ENCODE measurements at regions of chr15 and their contacts with region 1.

Region 1: DNA sequence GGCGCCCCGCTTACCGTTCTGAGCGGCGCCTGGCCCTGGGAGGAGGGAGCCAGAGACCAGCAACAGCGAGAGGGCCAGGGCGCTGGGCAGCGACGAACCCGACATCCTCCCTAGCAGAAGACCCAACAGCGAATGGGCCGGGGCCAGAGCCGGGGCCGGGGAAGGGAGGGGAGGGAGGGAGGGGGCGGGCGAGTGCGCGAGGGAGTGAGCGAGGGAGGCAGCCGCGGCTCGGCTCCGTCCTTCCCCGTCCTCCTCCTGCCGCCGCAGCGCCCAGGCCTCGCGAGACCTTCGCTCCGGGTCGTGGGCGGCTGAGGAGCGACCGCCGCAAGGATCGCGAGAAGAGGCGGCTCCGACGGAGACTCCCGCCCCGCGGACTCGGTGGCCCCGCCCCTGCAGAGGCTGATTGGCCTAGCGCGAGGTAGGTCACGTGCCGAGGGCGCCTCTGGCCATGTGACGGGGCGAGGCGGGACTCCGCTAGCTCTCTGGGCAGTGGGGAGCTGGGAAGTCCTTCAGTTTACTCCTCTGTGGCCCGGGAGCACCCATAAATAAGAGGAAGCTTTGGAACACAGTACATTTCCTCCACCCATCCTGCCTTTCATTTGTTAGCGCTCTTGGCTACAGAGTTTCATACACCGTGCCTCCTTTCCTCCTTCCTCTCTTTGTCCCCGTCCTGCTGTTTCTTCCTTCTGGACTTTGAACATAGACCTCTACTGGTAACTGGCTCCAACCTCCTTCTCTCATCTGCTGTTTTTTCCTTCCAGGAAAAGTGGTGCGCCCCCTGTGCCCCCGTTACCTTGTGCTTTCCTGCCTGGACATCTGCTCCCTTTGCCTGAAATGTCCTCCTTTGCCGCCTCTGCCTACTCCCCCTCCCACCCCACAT is at the start of gene NPTN:
- DNase-seq: peak; percentile 97
- H3K4me3 ChIP-seq: peak within 1 kb of the TSS; percentile 78 to 85
- H3K27ac ChIP-seq: peak within 1 kb of the TSS; percentile 82 to 98
- H3K4me1 ChIP-seq: peaks cover 28 to 29% of the 10 kb centered on the region in 2 experiments
- H3K27me3 ChIP-seq: no peaks in the 10 kb centered on the region
- CTCF ChIP-seq: 0 out of 2 replicates have a peak, but pooled peaks have one; percentile 14
- EP300 ChIP-seq: no peak
- RAD21 ChIP-seq: no peak
- polyA plus RNA-seq, gene NPTN: 177 and 183 TPM in 2 replicates

Region 2: GRCh38 chr15:73550190-73550589 is 83.2 kb before region 1 on chr15:
- CTCF ChIA-PET with region 1: interaction called, 16 read pairs
- POLR2A ChIA-PET with region 1: no interaction called
- DNase-seq: no peak
- H3K4me3 ChIP-seq: no peak overlapping the region
- H3K27ac ChIP-seq: no peak overlapping the region
- H3K4me1 ChIP-seq: no peaks in the 10 kb centered on the region
- H3K27me3 ChIP-seq: no peaks in the 10 kb centered on the region
- CTCF ChIP-seq: no peak
- EP300 ChIP-seq: no peak
- RAD21 ChIP-seq: no peak

Region 3: DNA sequence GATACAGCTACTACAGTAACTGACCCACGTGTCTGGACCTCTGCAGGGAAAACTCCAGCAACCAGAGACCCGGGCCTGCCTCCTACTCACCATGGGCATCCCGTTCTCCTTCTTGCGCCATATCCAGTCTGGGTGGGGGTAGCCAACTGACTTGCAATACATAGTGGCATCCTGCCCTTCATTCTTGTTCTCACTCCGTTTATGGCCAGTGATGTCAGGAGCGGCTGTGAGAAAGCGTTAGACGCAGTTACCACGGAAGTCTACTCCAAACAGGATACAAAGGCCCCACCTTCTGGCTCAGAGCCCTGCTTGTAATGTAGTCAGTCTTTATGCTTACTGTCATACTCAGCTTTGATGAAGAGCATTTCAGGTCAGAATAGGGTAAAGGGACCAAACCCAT is 59.8 kb before region 1 on chr15:
- CTCF ChIA-PET with region 1: interaction called, 19 read pairs
- POLR2A ChIA-PET with region 1: no interaction called
- DNase-seq: no peak
- H3K4me3 ChIP-seq: no peak overlapping the region
- H3K27ac ChIP-seq: no peak overlapping the region
- H3K4me1 ChIP-seq: peaks cover 0 to 2% of the 10 kb centered on the region in 2 experiments; a peak in 1 of 4 replicates
- H3K27me3 ChIP-seq: no peaks in the 10 kb centered on the region
- CTCF ChIP-seq: no peak
- EP300 ChIP-seq: no peak
- RAD21 ChIP-seq: no peak

Region 4: DNA sequence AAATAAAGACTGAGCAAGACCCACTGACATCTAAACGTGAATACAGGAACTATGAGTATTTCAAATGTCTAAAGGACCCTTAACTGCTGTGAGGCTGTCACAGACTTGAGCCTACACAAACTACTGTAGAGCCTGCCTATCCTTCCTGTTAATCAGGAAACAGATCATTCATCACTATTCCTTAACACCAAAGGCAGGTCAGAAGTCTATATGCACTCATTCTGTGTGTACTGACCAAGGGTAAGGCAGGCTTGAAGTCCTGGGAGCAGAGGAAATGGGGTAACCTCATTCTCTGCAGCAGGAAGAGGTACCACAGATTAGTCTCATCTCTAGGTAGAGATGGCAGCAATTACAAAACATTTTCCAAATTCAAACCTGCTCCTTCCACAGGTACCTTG is 30.9 kb before region 1 on chr15:
- CTCF ChIA-PET with region 1: interaction called, 16 read pairs
- POLR2A ChIA-PET with region 1: interaction called, 4 read pairs
- DNase-seq: no peak
- H3K4me3 ChIP-seq: no peak overlapping the region
- H3K27ac ChIP-seq: peak overlapping the region in 1 of 2 experiments; percentile 45; a peak in 1 of 4 replicates
- H3K4me1 ChIP-seq: peaks cover 22 to 41% of the 10 kb centered on the region in 2 experiments
- H3K27me3 ChIP-seq: no peaks in the 10 kb centered on the region
- CTCF ChIP-seq: no peak
- EP300 ChIP-seq: no peak
- RAD21 ChIP-seq: no peak

Region 5: DNA sequence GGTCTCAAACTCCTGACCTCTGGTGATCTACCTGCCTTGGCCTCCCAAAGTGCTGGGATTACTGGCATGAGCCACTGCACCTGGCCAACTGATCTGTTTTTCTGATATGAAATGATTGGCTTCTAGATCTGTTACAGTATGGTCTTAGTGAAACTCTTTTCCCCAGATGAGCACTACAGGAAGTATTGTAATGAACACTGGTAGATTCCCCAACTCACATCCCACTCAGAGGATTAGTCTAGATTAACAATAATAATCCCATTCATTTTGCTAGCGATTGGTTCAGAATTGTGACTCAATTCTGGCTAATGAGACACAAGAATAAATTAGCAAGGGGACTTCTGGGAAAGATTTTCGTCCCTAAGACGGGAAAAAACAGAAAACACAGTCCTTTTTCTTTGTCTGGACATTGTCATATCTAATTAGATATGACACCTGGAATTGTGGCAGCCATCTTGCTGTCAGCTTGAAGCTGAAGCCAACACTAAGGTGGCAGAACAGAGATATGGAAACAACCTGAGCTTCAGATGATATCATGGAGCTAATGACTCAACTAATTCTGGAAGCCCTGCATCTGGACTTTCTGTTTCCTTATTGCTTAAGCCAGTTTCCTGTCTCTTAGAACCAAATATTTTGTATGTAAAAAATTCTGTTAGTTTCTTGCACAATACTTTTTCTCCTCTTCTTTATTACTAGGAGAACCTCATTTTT is 17.2 kb after region 1 on chr15:
- CTCF ChIA-PET with region 1: interaction called, 37 read pairs
- POLR2A ChIA-PET with region 1: no interaction called
- DNase-seq: peak; percentile 49
- H3K4me3 ChIP-seq: peak overlapping the region in 1 of 2 experiments; percentile 26; a peak in 1 of 4 replicates
- H3K27ac ChIP-seq: peak overlapping the region; percentile 39 to 77; a peak in 3 of 4 replicates
- H3K4me1 ChIP-seq: no peaks in the 10 kb centered on the region; a peak in 2 of 4 replicates
- H3K27me3 ChIP-seq: no peaks in the 10 kb centered on the region
- CTCF ChIP-seq: no peak
- EP300 ChIP-seq: peak in 1 of 2 experiments; percentile 29; a peak in 1 of 4 replicates
- RAD21 ChIP-seq: no peak

Region 6: DNA sequence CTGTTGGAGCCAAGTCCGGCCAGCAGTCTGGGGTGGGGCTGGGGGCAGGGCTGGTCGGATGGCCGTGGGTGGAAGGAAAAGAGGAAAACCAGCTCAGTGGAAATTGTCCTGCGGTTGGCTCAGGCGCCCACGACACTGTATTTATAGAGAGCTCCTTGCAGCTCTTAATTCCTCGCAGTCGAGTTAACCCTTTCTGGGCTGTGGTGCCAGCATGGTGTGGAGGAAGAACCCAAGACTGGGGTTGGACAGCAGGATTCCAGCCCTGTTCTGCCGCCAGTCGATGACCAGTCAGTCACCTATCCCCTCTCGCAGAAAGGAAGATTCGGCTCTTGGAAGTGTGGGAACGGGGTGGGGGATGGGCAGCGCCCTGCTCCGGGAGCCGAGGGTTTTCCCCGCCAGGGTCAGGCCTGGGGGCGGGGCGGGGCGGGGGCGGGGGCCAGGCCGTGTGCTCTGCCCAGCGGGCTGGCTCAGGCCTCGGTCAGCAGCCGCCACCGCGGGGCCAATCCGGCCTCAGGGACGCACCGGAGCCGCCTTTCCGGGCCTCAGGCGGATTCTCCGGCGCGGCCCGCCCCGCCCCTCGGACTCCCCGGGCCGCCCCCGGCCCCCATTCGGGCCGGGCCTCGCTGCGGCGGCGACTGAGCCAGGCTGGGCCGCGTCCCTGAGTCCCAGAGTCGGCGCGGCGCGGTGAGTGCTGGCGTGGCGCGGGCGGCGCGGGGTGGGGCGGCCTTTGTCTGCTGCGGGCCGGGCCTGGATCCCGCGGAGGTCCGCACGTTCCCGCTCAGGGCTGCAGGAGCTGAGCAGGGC is 50.6 kb after region 1 on chr15 and contains the start of gene CD276:
- CTCF ChIA-PET with region 1: interaction called, 59 read pairs
- POLR2A ChIA-PET with region 1: interaction called, 3 read pairs
- DNase-seq: peak; percentile 91
- H3K4me3 ChIP-seq: peak within 1 kb of the TSS; percentile 82 to 89
- H3K27ac ChIP-seq: peak within 1 kb of the TSS; percentile 77 to 84
- H3K4me1 ChIP-seq: peaks cover 35 to 37% of the 10 kb centered on the region in 2 experiments; a peak in 3 of 4 replicates
- H3K27me3 ChIP-seq: no peaks in the 10 kb centered on the region
- CTCF ChIP-seq: no peak
- EP300 ChIP-seq: peak in 1 of 2 experiments; percentile 3; a peak in 1 of 4 replicates
- RAD21 ChIP-seq: peak; percentile 30; the same call in 1 of the 2 replicates
- polyA plus RNA-seq, gene CD276: 60.1 and 86.2 TPM in 2 replicates

Region 7: GRCh38 chr15:73712088-73712487 is 78.7 kb after region 1 on chr15:
- CTCF ChIA-PET with region 1: interaction called, 256 read pairs
- POLR2A ChIA-PET with region 1: no interaction called
- DNase-seq: no peak
- H3K4me3 ChIP-seq: no peak overlapping the region
- H3K27ac ChIP-seq: no peak overlapping the region
- H3K4me1 ChIP-seq: peaks cover 0 to 4% of the 10 kb centered on the region in 2 experiments; a peak in 1 of 4 replicates
- H3K27me3 ChIP-seq: no peaks in the 10 kb centered on the region
- CTCF ChIP-seq: peak; percentile 30; the same call in 1 of the 2 replicates
- EP300 ChIP-seq: no peak
- RAD21 ChIP-seq: peak; percentile 36; the same call in 1 of the 2 replicates